ENCODE measurements at regions of chr15 and their contacts with region 1.

Region 1: GRCh38 chr15:89206908-89207331 is 14.5 kb downstream of the RLBP1 start:
- DNase-seq: peak; percentile 90
- H3K4me3 Mint-ChIP-seq: peak overlapping the region; percentile 15
- H3K27ac Mint-ChIP-seq: no peak overlapping the region
- H3K4me1 Mint-ChIP-seq: peaks cover 8% of the 10 kb centered on the region
- H3K27me3 Mint-ChIP-seq: peaks cover 26% of the 10 kb centered on the region
- CTCF ChIP-seq: peak; percentile 96

Region 2: DNA sequence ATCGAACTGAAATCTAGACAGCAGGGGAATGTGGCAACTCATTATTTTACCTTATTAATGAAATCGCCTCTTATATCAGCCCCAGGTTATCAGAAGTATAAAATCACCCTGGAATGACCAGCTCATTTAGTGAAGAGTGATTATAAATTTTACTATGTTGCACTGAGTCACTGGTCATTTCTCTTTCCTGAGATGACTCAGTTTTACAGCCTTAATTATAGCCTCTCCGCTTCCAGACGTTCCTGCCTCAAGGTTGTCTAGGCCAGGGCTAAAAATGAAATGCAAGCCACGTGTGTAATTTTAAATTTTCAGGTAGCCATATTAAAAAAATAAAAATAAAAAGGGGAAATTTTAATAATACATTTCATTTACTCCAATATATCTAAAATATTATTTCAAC is 693.7 kb before region 1 on chr15:
- CTCF ChIA-PET with region 1: no interaction called
- intact Hi-C with region 1: no loop called
- DNase-seq: no peak
- H3K4me3 Mint-ChIP-seq: no peak overlapping the region
- H3K27ac Mint-ChIP-seq: no peak overlapping the region
- H3K4me1 Mint-ChIP-seq: no peaks in the 10 kb centered on the region
- H3K27me3 Mint-ChIP-seq: no peaks in the 10 kb centered on the region
- CTCF ChIP-seq: no peak

Region 3: GRCh38 chr15:89243691-89244471 is 37.0 kb after region 1 on chr15 and contains the start of gene FANCI:
- CTCF ChIA-PET with region 1: interaction called, 28 read pairs
- intact Hi-C with region 1: loop called (anchors 1 kb)
- DNase-seq: peak; percentile 98
- H3K4me3 Mint-ChIP-seq: peak within 1 kb of the TSS; percentile 91
- H3K27ac Mint-ChIP-seq: peak within 1 kb of the TSS; percentile 79
- H3K4me1 Mint-ChIP-seq: peaks cover 29% of the 10 kb centered on the region
- H3K27me3 Mint-ChIP-seq: peaks cover 30% of the 10 kb centered on the region
- CTCF ChIP-seq: no peak
- total RNA-seq, gene FANCI: 138 and 140 TPM in 2 replicates

Region 4: DNA sequence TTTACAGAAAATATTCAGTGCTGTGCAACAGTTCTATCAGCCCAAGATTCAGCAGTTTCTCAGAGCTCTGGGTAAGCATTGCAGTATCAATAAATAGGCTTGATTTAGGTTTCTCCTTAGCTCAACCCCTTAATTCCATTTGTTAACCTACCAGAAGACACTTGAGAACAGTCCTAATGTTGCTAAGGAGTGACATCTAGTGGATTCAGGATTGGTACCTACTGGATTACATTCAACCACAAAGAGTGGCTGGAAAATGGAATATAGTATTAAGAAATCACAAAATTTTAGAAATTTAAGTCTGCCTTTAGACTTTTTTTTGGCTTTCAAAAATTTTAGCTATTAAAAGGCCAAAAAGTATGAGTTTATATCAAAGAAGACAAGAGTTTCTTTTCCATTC is 93.0 kb after region 1 on chr15:
- CTCF ChIA-PET with region 1: interaction called, 4 read pairs
- intact Hi-C with region 1: loop called (anchors 2 kb)
- DNase-seq: no peak
- H3K4me3 Mint-ChIP-seq: no peak overlapping the region
- H3K27ac Mint-ChIP-seq: no peak overlapping the region
- H3K4me1 Mint-ChIP-seq: no peaks in the 10 kb centered on the region
- H3K27me3 Mint-ChIP-seq: no peaks in the 10 kb centered on the region
- CTCF ChIP-seq: no peak